ENCODE measurements at regions of chr1 and their contacts with region 1.

Region 1: GRCh38 chr1:184664042-184664655 is 90.5 kb downstream of the EDEM3 start:
- DNase-seq: peak; percentile 66 to 76 (median 69)
- ATAC-seq: peak; percentile 86
- H3K4me3 ChIP-seq: no peak overlapping the region
- H3K27ac ChIP-seq: no peak overlapping the region
- H3K4me1 ChIP-seq: peaks cover 12% of the 10 kb centered on the region
- H3K27me3 ChIP-seq: no peaks in the 10 kb centered on the region
- CTCF ChIP-seq: peak; percentile 73 to 85 (median 79)
- POLR2A ChIP-seq: no peak

Region 2: GRCh38 chr1:184242507-184242943 is 421.6 kb before region 1 on chr1:
- intact Hi-C with region 1: loop called (anchors 10 kb)
- DNase-seq: peak; percentile 38 to 63 (median 42)
- ATAC-seq: peak; percentile 78
- H3K4me3 ChIP-seq: no peak overlapping the region
- H3K27ac ChIP-seq: peak overlapping the region in 3 of 4 donors; percentile 7 to 33 (median 32)
- H3K4me1 ChIP-seq: peaks cover 28% of the 10 kb centered on the region
- H3K27me3 ChIP-seq: no peaks in the 10 kb centered on the region
- CTCF ChIP-seq: peak in 5 of 7 experiments; percentile 18 to 59 (median 52)
- POLR2A ChIP-seq: no peak

Region 3: GRCh38 chr1:184272175-184272866 is 391.8 kb before region 1 on chr1:
- intact Hi-C with region 1: no loop called
- DNase-seq: no peak
- ATAC-seq: peak; percentile 55
- H3K4me3 ChIP-seq: no peak overlapping the region
- H3K27ac ChIP-seq: peak overlapping the region in 1 of 4 donors; percentile 14
- H3K4me1 ChIP-seq: no peaks in the 10 kb centered on the region
- H3K27me3 ChIP-seq: no peaks in the 10 kb centered on the region
- CTCF ChIP-seq: no peak
- POLR2A ChIP-seq: no peak

Region 4: GRCh38 chr1:184535191-184535970 is 128.8 kb before region 1 on chr1:
- intact Hi-C with region 1: no loop called
- DNase-seq: no peak
- ATAC-seq: peak; percentile 65
- H3K4me3 ChIP-seq: no peak overlapping the region
- H3K27ac ChIP-seq: peak overlapping the region in 2 of 4 donors; percentile 21 to 25
- H3K4me1 ChIP-seq: peaks cover 7% of the 10 kb centered on the region
- H3K27me3 ChIP-seq: no peaks in the 10 kb centered on the region
- CTCF ChIP-seq: no peak
- POLR2A ChIP-seq: no peak

Region 5: DNA sequence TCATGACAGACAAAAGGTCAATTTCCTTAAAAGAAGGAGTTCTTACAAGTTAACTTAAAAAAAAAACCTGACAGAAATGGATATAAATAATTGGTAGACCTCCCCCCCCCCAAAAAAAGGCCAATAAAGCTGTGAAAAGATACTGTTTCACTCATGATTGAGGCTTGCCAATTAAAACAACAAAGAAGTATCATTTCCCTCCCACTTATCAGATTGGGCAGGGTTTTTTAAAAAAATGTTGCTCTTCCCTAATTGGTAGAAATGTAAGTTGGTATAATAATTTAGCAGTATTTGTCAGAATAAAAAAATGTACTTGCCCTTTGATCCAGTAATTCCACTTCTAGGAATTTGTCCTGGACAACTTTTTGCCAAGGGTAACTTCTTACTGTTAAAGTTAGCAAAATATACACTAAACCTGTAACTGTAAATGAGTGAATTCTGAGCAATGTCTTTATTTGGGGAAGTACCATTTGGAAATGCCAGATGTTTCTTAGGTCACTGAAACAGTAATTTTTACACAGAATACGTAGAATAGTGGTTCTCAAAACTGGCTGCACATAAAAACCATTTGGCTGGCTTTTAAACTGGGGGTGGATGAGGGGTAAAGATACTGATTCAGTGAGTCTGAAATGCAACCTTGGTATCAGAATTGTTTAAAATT is 398.7 kb after region 1 on chr1:
- intact Hi-C with region 1: no loop called
- DNase-seq: no peak
- ATAC-seq: no peak
- H3K4me3 ChIP-seq: no peak overlapping the region
- H3K27ac ChIP-seq: no peak overlapping the region
- H3K4me1 ChIP-seq: peaks cover 23% of the 10 kb centered on the region
- H3K27me3 ChIP-seq: no peaks in the 10 kb centered on the region
- CTCF ChIP-seq: no peak
- POLR2A ChIP-seq: no peak

Measured in body of pancreas (tissue), 4 donors.